ENCODE measurements at regions of chr7 and their contacts with region 1.

Region 1: DNA sequence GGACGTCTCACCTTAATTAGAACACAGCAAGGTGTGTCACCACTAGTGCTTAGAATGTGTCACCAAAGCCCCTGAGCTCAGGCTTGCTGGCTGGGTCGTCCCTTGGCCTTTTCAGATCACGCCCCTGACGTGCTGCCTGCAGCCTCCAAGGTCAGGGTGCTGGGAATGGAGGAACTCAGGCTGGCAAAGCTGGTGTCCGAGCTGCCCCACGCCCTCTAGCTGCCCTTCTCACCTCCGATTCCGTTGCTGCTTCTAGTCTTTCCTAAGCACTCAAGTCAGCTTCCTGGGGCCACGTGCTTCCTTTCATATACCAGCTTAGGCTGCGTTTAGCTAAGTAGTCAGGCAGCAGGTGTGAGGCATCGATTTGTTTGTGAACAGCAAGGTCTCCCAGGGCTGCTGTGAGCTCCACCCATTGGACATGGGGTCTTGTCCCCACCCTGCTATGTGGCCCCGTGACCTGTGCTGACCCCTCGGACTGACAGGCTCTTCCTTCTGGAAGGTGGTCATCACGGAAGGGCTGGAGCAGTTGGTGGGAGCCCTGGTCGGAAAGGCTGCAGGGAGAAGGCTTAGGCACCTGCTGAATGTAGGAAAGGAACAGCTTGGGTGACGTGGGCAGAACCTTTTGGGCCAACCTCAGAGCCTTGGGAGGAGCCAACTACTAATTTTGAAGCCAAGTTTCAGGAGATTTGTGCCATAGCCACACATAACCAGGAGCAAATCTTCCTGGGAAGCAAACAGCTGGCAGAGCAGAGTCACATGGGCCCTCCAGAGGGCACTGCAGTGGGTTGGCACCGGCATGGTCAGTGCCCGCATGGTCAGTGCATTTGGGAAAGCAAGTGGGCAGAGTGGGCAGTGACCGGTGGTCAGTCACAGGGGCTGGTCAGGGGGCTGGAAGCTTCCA is 28.8 kb downstream of the VIPR2 start:
- DNase-seq: no peak
- H3K4me3 ChIP-seq: no peak overlapping the region
- H3K27ac ChIP-seq: no peak overlapping the region
- H3K4me1 ChIP-seq: no peaks in the 10 kb centered on the region
- H3K27me3 ChIP-seq: no peaks in the 10 kb centered on the region
- CTCF ChIP-seq: no peak

Region 2: GRCh38 chr7:158517072-158517970 is 598.5 kb before region 1 on chr7:
- CTCF ChIA-PET with region 1: no interaction called
- dilution Hi-C with region 1: no loop called
- in situ Hi-C with region 1: no loop called
- intact Hi-C with region 1: no loop called
- DNase-seq: no peak
- H3K4me3 ChIP-seq: no peak overlapping the region
- H3K27ac ChIP-seq: no peak overlapping the region
- H3K4me1 ChIP-seq: no peaks in the 10 kb centered on the region
- H3K27me3 ChIP-seq: no peaks in the 10 kb centered on the region
- CTCF ChIP-seq: no peak

Region 3: DNA sequence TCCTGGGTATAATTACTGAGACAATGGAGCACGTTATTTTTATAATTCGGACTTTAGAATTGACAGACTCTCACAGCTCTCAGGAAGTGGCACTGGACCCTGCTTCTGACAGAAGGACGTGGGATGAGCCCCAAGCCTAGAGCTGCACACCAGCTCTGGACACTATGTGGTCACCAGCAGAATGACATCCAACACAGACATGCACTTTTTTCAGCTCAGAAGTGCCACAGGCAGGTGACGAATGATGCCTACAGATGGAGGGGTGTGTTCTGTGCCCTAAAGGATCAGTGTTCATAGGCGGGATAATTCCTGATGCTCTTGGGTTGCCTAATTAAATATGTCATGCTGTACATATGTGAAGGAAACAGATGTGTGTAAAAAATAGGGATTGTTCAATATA is 59.1 kb before region 1 on chr7:
- CTCF ChIA-PET with region 1: no interaction called
- dilution Hi-C with region 1: no loop called
- in situ Hi-C with region 1: no loop called
- intact Hi-C with region 1: no loop called
- DNase-seq: no peak
- H3K4me3 ChIP-seq: no peak overlapping the region
- H3K27ac ChIP-seq: no peak overlapping the region
- H3K4me1 ChIP-seq: no peaks in the 10 kb centered on the region
- H3K27me3 ChIP-seq: no peaks in the 10 kb centered on the region
- CTCF ChIP-seq: no peak

Region 4: GRCh38 chr7:159172400-159172799 is 56.5 kb after region 1 on chr7:
- CTCF ChIA-PET with region 1: no interaction called
- dilution Hi-C with region 1: loop called (anchors 5 kb)
- in situ Hi-C with region 1: no loop called
- intact Hi-C with region 1: no loop called
- DNase-seq: no peak
- H3K4me3 ChIP-seq: no peak overlapping the region
- H3K27ac ChIP-seq: no peak overlapping the region
- H3K4me1 ChIP-seq: no peaks in the 10 kb centered on the region
- H3K27me3 ChIP-seq: no peaks in the 10 kb centered on the region
- CTCF ChIP-seq: no peak

Measured in mammary epithelial cell (primary cell).